ENCODE measurements at regions of chr20 and their contacts with region 1.

Region 1: GRCh38 chr20:46349035-46349741 is 40.9 kb upstream of the CDH22 start:
- DNase-seq: peak; percentile 49 to 64
- ATAC-seq: peak; percentile 48 to 77 (median 74)
- H3K4me3 ChIP-seq: peak overlapping the region in 1 of 10 donors; percentile 8
- H3K27ac ChIP-seq: no peak overlapping the region
- H3K4me1 ChIP-seq: peaks cover 0 to 19% (median 8%) of the 10 kb centered on the region in 9 donors
- H3K27me3 ChIP-seq: peaks cover 0 to under 1% (median 0%) of the 10 kb centered on the region in 7 donors
- CTCF ChIP-seq: peak; percentile 58 to 89 (median 78)

Region 2: DNA sequence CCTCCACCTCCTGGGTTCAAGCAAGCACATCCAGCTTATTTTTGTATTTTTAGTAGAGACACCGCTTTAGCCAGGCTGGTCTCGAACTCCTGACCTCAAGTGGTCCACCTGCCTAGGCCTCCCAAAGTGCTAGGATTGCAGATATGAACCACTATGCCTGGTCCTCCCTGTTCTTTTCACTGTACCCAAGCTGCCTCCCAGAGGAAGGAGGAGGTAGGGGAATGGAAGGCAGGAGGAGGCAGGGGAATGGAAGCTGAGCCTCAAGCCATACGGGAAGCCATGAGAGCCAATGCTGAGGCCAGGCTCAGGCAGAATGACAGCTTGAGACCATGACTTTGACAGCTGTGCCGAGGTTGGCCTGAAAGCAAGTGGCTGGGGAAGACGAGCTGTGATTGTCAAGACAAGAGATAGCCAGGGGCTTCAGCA is 363.7 kb before region 1 on chr20:
- intact Hi-C with region 1: loop called in 1 of 10 experiments (anchors 2 kb)
- DNase-seq: no peak
- ATAC-seq: no peak
- H3K4me3 ChIP-seq: no peak overlapping the region
- H3K27ac ChIP-seq: no peak overlapping the region
- H3K4me1 ChIP-seq: no peaks in the 10 kb centered on the region
- H3K27me3 ChIP-seq: peaks cover 0 to 60% (median 39%) of the 10 kb centered on the region in 7 donors
- CTCF ChIP-seq: no peak

Region 3: GRCh38 chr20:46013826-46014516 is 335.2 kb before region 1 on chr20:
- intact Hi-C with region 1: loop called in 1 of 10 experiments (anchors 10 kb)
- DNase-seq: peak in 1 of 2 donors; percentile 49
- ATAC-seq: peak in 7 of 8 donors; percentile 40 to 77 (median 68)
- H3K4me3 ChIP-seq: peak overlapping the region in 1 of 10 donors; percentile 30
- H3K27ac ChIP-seq: no peak overlapping the region
- H3K4me1 ChIP-seq: peaks cover 0 to 49% (median 9%) of the 10 kb centered on the region in 9 donors
- H3K27me3 ChIP-seq: peaks cover 24 to 99% (median 91%) of the 10 kb centered on the region in 7 donors
- CTCF ChIP-seq: peak; percentile 27 to 83 (median 68)

Region 4: GRCh38 chr20:46022411-46023147 is 326.6 kb before region 1 on chr20:
- intact Hi-C with region 1: loop called in 3 of 10 experiments (anchors 10 kb)
- DNase-seq: peak; percentile 39 to 74
- ATAC-seq: peak; percentile 30 to 76 (median 58)
- H3K4me3 ChIP-seq: peak overlapping the region in 4 of 10 donors; percentile 7 to 52 (median 50)
- H3K27ac ChIP-seq: no peak overlapping the region
- H3K4me1 ChIP-seq: peaks cover 0 to 20% (median 9%) of the 10 kb centered on the region in 9 donors
- H3K27me3 ChIP-seq: peaks cover 14 to 100% (median 92%) of the 10 kb centered on the region in 7 donors
- CTCF ChIP-seq: peak; percentile 41 to 74 (median 68)

Region 5: DNA sequence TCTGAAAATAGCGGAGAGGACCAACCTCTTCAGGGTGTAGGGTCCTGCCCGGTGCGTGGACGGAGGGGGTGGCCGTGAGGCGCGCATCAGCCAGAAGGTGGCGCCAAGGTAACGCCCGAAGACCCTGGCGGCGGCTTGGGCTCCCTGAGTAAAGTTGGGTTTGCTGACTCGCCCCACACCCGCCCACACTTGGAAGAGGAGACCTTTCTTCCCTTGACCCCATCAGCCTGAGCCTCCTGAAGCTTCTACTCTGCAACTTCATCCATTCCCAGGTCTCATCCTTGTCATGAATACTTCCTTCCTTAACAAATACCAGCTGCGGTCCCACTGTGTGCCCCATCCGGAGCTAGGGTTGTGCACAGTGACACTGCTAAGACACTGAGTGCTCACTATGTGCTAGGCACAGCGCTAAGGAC is 216.5 kb before region 1 on chr20:
- intact Hi-C with region 1: loop called (anchors 1 to 5 kb)
- DNase-seq: peak; percentile 72 to 76
- ATAC-seq: peak; percentile 82 to 91 (median 88)
- H3K4me3 ChIP-seq: no peak overlapping the region
- H3K27ac ChIP-seq: no peak overlapping the region
- H3K4me1 ChIP-seq: peaks cover 0 to 31% (median 24%) of the 10 kb centered on the region in 9 donors
- H3K27me3 ChIP-seq: peaks cover 0 to 56% (median 24%) of the 10 kb centered on the region in 7 donors
- CTCF ChIP-seq: peak; percentile 72 to 93 (median 87)

Region 6: DNA sequence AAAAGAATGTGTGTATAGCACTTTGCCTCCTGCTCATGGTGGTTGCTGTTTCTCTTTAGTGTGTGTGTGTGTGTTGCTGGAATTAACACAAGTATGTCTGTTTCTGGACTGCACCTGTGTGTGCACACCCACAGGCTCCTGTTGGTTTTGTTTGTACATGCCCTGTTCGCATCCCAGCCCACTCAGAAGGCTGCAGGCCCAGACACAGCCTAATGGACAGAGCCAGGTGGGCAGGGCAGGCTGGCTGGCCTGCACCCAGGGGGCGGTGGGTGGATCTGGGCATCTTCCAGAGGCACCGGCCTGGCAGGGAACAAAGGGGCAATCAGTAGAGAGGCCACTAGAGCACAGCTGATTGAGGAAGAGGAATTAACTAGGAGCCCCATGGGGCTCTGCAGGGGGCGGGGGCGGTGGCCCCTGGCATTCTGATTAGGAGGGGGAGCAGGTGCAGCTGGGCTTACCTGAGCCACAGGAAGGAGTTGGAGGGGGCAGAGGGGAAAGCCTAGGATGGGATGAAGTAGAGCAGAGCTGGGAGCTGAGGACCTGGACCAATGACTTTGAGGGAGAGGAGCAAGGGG is 209.2 kb before region 1 on chr20:
- intact Hi-C with region 1: loop called in 2 of 10 experiments (anchors 5 kb)
- DNase-seq: no peak
- ATAC-seq: no peak
- H3K4me3 ChIP-seq: no peak overlapping the region
- H3K27ac ChIP-seq: no peak overlapping the region
- H3K4me1 ChIP-seq: no peaks in the 10 kb centered on the region
- H3K27me3 ChIP-seq: peaks cover 0 to 90% (median 66%) of the 10 kb centered on the region in 7 donors
- CTCF ChIP-seq: no peak

Measured in heart right ventricle (tissue), 16 donors.